Posterior vena cava (tissue), 2 donors: ENCODE measurements at regions of chr11 and their contacts with region 1.

Region 1: DNA sequence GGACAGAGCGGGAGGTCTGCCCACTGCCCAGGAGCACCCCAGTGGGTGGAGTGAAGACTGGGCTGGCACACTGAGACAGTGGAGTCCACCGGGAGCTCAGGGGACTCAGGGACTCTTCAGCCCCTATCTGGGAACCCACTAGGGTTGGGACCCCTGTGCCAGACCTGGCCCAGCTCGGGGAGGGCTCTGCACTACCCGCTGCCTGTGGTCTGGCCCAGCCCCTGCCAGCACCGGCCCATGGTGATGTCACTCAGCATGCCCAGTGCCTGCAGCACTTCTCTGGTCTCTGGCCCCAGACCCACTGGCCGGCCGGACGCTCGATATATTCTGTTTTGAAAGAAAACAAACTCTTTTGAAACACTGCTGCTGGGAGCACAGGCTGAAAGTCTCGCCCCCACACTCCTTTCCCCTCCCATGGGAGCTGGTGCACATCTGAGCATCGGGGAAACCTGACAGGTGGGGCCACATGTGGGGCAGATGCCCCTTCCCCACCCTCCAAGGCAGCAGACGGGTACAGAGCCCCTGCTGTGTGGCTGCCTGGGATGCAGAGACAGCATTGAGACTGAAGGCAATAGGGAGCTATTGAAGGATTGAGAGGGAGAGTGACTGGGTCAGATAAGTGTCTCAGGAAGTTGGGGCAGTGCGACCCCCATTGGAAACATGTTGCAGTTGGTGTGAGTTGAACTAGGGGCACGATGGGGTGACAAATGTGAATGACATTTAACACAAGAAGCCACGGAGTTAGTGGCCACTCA is 62.9 kb downstream of the MYEOV start:
- DNase-seq: peak; percentile 67

Region 2: DNA sequence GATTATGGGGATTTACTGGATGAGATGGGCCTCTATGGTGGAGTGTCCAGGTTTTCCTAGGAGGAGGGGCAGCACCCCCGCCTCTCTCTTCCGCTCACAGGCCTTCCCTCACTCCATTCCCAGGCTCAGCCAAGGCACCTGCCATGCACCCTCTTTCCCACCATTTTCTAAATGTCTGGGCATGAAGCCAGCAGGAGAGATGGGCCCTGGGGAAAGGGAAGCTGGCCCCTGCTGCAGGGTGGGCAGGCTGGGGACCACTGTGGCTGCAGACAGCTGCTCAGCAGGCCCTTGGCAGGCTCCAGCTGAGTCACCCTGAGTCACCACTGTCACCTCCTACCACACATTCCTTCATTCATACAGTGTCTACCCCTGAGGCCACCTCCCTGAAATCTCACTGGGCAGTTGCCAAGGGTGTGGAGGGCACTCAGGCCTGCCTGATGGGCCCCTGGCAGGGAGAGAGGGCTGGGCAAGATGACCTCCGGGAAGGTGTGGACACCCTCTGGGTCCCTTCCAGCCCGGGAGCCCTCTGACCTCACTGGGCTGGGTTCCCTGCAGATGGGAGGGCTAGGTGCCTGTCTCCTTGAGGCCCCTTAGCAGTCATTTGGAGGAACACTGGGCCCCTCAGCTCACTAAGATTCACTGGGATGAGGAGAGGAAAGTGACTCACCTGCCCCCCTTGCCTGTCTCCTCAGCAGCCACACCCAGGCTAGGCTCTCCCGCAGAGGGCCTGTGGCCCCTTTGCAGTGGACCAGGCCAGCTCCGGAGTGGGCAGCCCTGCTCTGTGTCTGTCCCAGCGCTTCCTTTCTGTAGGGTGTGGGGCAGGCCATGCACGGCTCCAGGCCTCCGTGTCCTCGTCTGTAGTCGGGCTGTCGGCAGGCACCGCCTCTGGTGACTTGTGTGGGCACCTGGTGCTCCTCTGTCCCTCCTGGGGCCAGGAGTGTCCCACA is 55.2 kb before region 1 on chr11:
- intact Hi-C with region 1: no loop called
- DNase-seq: no peak

Region 3: GRCh38 chr11:69417146-69418085 is 60.5 kb after region 1 on chr11:
- intact Hi-C with region 1: loop called in 1 of 2 experiments (anchors 5 kb)
- DNase-seq: peak; percentile 79

Region 4: DNA sequence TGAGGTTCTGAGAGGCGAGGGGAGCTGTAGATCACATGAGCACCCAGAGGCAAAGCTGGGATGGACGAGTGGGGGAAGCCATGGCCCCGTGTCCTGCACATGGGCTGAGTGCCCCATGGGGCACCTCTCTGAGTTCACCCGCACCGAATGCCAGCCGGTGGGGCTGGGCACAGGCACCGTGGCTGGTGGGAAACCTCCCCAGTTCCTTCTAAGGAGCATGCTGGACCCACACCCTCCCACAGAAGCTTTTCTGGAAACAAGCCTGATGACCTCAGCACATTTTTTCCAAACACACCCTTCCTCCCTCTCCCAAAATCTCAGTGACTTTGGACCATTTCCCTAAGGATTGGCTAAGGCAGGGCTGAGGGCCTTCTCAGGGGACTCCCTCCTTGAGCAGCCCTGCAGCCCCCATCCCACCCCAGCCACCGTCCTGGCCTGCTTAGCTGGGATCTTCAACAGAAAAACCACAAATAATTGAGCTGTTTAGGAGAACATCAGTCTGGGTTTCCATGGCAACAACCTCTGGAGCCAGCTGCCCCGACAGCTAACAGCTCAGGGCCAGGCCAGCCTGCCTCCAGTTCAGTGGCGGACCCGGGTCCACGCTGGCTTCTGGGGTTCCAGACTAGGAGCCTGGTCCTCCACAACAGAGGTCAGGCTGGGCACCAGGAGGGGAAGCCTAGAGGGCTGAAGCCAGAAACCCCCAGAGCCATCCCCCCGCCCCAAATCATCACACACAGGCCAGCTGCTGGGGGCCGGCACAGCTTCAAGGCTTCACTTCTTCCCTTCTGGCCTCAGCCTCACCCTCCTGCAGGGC is 106.5 kb after region 1 on chr11:
- intact Hi-C with region 1: no loop called
- DNase-seq: peak; percentile 90